ENCODE measurements at regions of chr14 and their contacts with region 1.

Region 1: GRCh38 chr14:94689218-94689984 is 77.2 kb downstream of the SERPINA3 start:
- DNase-seq: no peak
- H3K4me3 ChIP-seq: peak overlapping the region in 1 of 2 donors; percentile 18
- H3K27ac ChIP-seq: no peak overlapping the region
- H3K4me1 ChIP-seq: no peaks in the 10 kb centered on the region
- H3K27me3 ChIP-seq: no peaks in the 10 kb centered on the region
- CTCF ChIP-seq: peak; percentile 90 to 99 (median 94)

Region 2: DNA sequence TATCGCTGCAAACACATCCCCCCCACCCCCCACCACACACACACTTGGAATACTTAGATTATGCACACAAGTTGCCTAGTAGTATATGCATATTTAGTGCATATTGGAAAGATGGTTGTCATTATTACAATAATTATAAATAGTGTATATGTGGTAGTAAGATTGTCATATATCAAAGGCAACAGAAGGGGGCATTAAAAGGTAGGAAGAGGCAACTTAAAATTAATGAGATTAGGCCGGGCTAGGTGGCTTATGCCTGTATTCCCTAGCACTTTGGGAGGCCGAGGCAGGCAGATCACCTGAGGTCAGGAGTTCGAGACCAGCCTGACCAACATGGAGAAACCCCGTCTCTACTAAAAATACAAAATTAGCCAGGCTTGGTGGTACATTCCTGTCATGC is 28.4 kb after region 1 on chr14:
- intact Hi-C with region 1: no loop called
- DNase-seq: no peak
- H3K4me3 ChIP-seq: no peak overlapping the region
- H3K27ac ChIP-seq: no peak overlapping the region
- H3K4me1 ChIP-seq: no peaks in the 10 kb centered on the region
- H3K27me3 ChIP-seq: no peaks in the 10 kb centered on the region
- CTCF ChIP-seq: no peak

Region 3: DNA sequence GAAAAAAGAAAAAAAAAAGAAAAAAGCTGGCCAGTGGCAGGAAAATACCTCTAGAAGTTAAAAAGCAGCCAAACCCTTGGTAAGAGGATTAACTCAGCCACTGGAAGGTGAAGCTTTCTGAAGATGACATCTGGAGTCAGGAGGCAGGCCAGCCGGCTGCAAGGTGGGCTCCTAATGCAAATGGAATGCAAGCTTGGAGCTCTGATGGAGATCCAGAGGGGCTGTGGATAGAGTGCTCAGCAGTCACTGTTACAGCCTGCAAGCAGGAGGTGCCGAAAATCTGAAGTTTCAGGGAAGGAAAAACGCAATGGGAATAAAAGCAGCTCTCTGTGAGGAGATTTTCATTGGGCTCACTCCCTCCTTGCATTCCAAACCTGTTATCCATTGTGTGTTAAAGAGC is 39.5 kb after region 1 on chr14:
- intact Hi-C with region 1: no loop called
- DNase-seq: no peak
- H3K4me3 ChIP-seq: no peak overlapping the region
- H3K27ac ChIP-seq: no peak overlapping the region
- H3K4me1 ChIP-seq: no peaks in the 10 kb centered on the region
- H3K27me3 ChIP-seq: no peaks in the 10 kb centered on the region
- CTCF ChIP-seq: no peak

Region 4: GRCh38 chr14:94907626-94908261 is 218.3 kb after region 1 on chr14:
- intact Hi-C with region 1: no loop called
- DNase-seq: no peak
- H3K4me3 ChIP-seq: no peak overlapping the region
- H3K27ac ChIP-seq: no peak overlapping the region
- H3K4me1 ChIP-seq: no peaks in the 10 kb centered on the region
- H3K27me3 ChIP-seq: no peaks in the 10 kb centered on the region
- CTCF ChIP-seq: no peak

Region 5: GRCh38 chr14:95101736-95102677 is 412.6 kb after region 1 on chr14:
- intact Hi-C with region 1: loop called (anchors 5 kb)
- DNase-seq: no peak
- H3K4me3 ChIP-seq: no peak overlapping the region
- H3K27ac ChIP-seq: no peak overlapping the region
- H3K4me1 ChIP-seq: peaks cover 0 to 12% of the 10 kb centered on the region in 2 donors
- H3K27me3 ChIP-seq: no peaks in the 10 kb centered on the region
- CTCF ChIP-seq: no peak

Region 6: GRCh38 chr14:95431199-95432143 is 742.1 kb after region 1 on chr14:
- intact Hi-C with region 1: loop called (anchors 2 kb)
- DNase-seq: no peak
- H3K4me3 ChIP-seq: no peak overlapping the region
- H3K27ac ChIP-seq: no peak overlapping the region
- H3K4me1 ChIP-seq: no peaks in the 10 kb centered on the region
- H3K27me3 ChIP-seq: no peaks in the 10 kb centered on the region
- CTCF ChIP-seq: peak in 2 of 3 experiments; percentile 23 to 37